Tibial artery (tissue), 4 donors: ENCODE measurements at regions of chr16 and their contacts with region 1.

Region 1: DNA sequence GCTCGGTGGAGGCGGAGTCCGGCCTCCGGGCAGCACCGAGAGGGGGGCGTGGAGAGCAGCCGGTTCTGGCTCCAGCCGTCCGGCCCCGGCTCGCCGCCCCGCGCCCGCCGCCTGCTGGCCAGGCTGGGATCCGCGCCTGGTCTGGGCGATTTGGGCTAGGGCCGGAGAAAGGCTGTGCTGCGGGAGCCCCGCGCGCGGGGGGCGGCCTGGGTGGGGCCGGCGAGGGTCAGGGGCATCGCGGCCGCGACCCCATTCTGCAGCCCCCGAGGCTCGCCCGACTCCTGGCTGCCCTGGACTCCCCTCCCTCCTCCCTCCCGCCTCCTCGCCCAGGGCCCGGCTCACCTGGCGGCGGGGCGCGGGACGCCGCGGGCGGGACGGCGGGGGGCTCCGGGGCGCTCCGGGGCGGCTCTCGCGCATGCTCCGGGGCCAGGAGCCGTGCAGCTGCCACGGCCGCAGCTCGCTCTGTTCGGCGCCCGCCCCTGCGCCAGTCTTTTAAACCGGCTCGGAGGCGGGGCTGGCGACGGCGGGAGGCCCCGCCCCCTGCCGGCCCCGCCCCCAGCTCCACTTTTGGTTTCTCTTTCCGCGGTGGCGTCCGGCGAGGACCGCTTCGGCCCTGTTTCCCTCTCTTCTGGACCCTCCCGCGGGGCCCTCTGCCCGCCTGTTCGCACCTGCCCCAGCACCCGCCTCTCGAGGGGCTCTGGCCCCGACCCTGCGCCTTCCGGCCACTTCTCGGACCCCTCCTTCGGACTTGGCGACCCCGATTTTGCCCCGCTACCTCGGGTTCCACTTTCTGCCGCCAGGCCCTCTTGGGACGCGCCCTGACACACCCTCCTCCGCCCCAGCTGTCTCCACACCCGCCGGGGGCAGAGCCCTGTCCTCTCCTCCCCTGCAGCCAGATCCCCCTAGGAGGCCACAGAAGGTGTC is at the start of gene SOCS1:
- DNase-seq: peak; percentile 74 to 91
- H3K4me3 ChIP-seq: peak within 1 kb of the TSS; percentile 73 to 81
- H3K27ac ChIP-seq: peak within 1 kb of the TSS; percentile 93 to 96
- H3K4me1 ChIP-seq: peaks cover 0 to 52% (median 36%) of the 10 kb centered on the region in 4 donors
- H3K27me3 ChIP-seq: no peaks in the 10 kb centered on the region
- CTCF ChIP-seq: peak; percentile 90 to 96

Region 2: DNA sequence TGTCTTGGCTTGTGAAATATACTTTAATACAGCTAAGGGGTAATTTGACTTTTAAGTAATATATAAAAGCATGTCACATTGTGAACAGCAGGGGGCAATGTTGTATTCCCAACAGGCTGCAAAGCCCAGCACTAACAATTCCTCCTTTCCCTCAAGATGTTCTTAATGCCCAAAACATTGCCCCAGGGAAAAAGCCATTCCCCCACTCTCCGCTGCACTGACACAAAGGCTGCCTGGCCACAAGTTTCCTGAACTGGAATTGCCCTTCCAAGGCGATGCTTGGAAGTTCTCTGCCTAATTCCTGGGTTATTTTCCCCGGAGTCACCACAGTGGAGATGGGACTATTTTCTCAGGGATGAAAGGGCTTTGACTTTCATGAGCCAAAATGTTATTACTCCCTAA is 284.4 kb before region 1 on chr16:
- intact Hi-C with region 1: loop called (anchors 2 kb)
- DNase-seq: peak; percentile 60 to 72
- H3K4me3 ChIP-seq: no peak overlapping the region
- H3K27ac ChIP-seq: peak overlapping the region; percentile 47 to 49
- H3K4me1 ChIP-seq: peaks cover 0 to 26% (median 12%) of the 10 kb centered on the region in 4 donors
- H3K27me3 ChIP-seq: no peaks in the 10 kb centered on the region
- CTCF ChIP-seq: peak; percentile 79 to 91

Region 3: DNA sequence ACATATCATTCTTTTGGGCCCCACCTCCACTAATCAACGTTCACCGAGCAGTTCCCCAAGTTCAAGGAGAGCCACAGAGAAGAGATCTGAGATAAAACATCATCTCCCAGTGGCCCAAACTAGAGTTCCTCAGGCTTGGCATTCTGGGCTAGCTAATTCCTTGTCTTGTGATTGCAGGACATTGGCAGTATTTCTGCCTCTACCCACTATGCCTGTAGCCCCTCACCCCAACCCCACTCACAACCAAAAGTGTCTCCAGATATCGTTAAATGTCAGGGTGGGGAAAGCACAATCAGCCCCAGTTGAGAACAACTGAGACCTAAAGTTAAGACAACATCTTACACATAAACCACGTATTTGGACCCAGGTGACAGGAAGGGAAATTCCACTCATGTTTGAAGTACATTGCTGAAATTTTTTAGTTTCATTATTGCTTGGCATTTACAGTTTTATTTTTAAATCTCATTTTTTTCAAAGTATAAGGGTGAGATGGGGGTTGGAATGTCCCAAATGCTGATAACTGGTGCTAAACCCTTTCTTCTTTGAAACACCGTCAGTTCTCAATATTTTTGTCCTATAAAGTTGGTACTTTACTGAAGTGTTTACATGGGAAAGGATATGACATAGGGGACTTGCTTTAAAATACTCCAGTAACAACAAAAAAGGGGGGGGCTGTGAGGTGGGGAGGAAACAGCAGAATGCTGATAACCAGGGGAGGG is 527.5 kb after region 1 on chr16:
- intact Hi-C with region 1: loop called (anchors 5 kb)
- DNase-seq: no peak
- H3K4me3 ChIP-seq: peak overlapping the region; percentile 15 to 38
- H3K27ac ChIP-seq: peak overlapping the region; percentile 77 to 90
- H3K4me1 ChIP-seq: peaks cover 0 to 84% (median 44%) of the 10 kb centered on the region in 4 donors
- H3K27me3 ChIP-seq: no peaks in the 10 kb centered on the region
- CTCF ChIP-seq: no peak

Region 4: GRCh38 chr16:12062343-12063005 is 806.5 kb after region 1 on chr16:
- intact Hi-C with region 1: no loop called
- DNase-seq: peak; percentile 94 to 97
- H3K4me3 ChIP-seq: no peak overlapping the region
- H3K27ac ChIP-seq: peak overlapping the region; percentile 72
- H3K4me1 ChIP-seq: peaks cover 0 to 27% (median 14%) of the 10 kb centered on the region in 4 donors
- H3K27me3 ChIP-seq: no peaks in the 10 kb centered on the region
- CTCF ChIP-seq: no peak